HCT116 (cell line): ENCODE measurements at regions of chr11 and their contacts with region 1.

Region 1: DNA sequence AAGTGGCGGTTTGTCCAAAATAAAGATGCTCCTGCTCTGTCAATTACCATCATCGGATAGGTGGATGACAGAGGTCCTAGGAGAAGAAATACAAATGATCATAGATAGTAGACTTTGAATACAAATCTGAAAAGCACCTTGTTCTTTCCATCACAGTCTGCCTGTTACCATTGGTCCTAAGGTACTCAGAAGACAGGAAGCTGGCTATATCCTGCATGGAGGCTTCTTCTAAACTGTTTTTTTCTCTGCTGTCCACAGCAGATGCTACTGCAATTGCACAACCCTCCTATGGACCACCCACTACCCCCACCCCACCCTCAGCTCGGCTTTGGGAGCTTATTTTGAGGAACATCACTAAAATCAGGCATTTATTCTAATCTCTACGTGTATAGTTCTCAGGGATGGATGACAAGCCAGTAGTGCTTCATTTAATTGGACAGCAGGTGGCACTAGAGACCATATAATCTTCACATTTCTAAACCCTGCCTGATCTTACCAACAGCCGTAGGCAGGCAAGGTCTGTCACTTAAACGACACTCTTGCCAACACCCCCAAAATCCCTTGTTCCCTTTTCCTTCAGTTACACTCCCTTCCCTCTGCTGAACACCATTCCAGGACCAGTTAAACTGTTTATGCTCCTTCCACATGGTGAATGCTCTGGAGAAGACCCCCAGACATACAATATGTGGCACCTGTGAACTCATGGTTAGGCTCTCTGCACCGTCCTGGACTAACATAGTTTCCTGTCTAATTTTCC is 6.6 kb upstream of the PTS start:
- DNase-seq: peak; percentile 71
- ATAC-seq: peak; percentile 100
- H3K4me3 ChIP-seq: no peak overlapping the region
- H3K27ac ChIP-seq: no peak overlapping the region
- H3K4me1 ChIP-seq: no peaks in the 10 kb centered on the region
- H3K27me3 ChIP-seq: no peaks in the 10 kb centered on the region
- CTCF ChIP-seq: peak; percentile 57 to 85 (median 77)
- POLR2A ChIP-seq: no peak
- RAD21 ChIP-seq: peak; percentile 93

Region 2: GRCh38 chr11:112074026-112074811 is 145.4 kb before region 1 on chr11 and contains the start of gene NKAPD1:
- CTCF ChIA-PET with region 1: no interaction called
- POLR2A ChIA-PET with region 1: no interaction called
- RAD21 ChIA-PET with region 1: no interaction called
- intact Hi-C with region 1: no loop called
- DNase-seq: peak; percentile 83
- ATAC-seq: peak; percentile 88
- H3K4me3 ChIP-seq: peak within 1 kb of the TSS; percentile 83 to 98
- H3K27ac ChIP-seq: peak within 1 kb of the TSS; percentile 69
- H3K4me1 ChIP-seq: peaks cover 0 to 14% of the 10 kb centered on the region in 2 experiments; a peak in 3 of 4 replicates
- H3K27me3 ChIP-seq: no peaks in the 10 kb centered on the region
- CTCF ChIP-seq: 0 out of 6 replicates have a peak, but pooled peaks of 1 of the 3 experiments have one; percentile 9
- POLR2A ChIP-seq: peak; percentile 61
- RAD21 ChIP-seq: no peak
- total RNA-seq, gene NKAPD1: 19.4 TPM

Region 3: DNA sequence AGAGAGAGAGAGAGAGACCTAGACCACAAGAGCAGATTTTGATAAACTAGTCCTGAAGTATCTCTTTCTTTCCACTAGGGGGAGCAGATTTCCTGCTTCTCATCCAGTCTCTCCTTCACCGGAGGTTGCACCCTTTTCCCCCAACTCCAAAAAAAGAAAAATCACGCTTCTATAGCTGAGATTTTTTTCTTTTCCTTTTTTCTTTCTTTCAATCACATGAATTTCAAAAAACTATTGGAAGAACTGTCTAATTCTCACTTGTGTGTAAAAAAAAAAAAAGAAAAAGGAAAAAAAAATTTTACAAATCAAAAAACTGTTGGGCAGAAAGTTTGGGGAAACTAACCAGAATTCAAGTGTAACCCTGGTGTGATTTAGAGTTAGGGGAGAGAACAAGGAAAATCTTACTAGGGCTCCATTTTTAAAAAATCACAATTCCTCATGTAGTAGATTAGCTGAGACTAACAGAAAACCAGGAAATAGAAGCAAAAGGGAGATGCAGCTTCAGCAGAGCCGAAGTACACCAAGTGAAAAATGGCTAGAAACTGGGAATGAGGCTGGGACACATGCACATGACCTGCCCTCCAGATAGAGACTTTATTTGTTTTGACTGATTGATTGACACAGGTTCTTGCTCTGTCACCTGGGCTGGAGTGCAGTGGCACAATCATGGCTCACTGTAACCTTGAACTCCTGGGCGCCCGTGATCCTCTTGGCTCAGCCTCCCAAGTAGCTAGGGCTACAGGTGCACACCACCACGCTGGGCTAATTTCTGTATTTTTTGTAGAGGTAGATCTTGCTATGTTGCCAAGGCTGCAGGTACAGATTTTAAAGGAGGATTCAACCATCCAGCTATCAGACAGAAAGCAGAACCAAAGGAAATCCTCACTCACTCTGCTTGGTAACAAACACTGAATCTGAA is 105.9 kb before region 1 on chr11:
- CTCF ChIA-PET with region 1: interaction called, 10 read pairs
- POLR2A ChIA-PET with region 1: no interaction called
- RAD21 ChIA-PET with region 1: no interaction called
- intact Hi-C with region 1: no loop called
- DNase-seq: peak; percentile 49
- ATAC-seq: peak; percentile 81
- H3K4me3 ChIP-seq: no peak overlapping the region
- H3K27ac ChIP-seq: no peak overlapping the region; the same call in 1 of the 2 replicates
- H3K4me1 ChIP-seq: peaks cover 21 to 33% of the 10 kb centered on the region in 2 experiments
- H3K27me3 ChIP-seq: no peaks in the 10 kb centered on the region
- CTCF ChIP-seq: peak; percentile 49 to 63 (median 63); a peak in 5 of 6 replicates
- POLR2A ChIP-seq: no peak
- RAD21 ChIP-seq: peak; percentile 84

Region 4: DNA sequence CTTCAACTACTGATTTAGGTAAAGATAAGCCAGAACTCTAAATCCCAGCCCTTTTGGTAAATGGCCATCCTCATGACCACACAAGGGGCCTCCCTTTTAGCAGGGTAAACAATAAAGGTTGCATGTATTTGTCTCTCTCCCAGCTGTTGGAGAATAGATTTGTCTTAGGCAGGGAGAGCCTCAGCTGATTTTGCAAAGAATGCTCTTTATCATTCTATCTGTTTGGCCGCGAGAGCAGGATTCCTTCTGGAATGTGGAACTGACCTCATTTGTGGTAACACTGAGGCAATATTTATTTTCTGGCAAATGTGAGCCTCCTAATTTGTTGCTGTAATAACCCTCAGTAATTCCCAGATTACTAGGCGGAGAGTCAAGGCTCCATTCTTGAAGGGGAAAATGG is 21.8 kb after region 1 on chr11:
- CTCF ChIA-PET with region 1: no interaction called
- POLR2A ChIA-PET with region 1: no interaction called
- RAD21 ChIA-PET with region 1: no interaction called
- intact Hi-C with region 1: no loop called
- DNase-seq: no peak
- ATAC-seq: no peak
- H3K4me3 ChIP-seq: no peak overlapping the region
- H3K27ac ChIP-seq: no peak overlapping the region
- H3K4me1 ChIP-seq: no peaks in the 10 kb centered on the region
- H3K27me3 ChIP-seq: no peaks in the 10 kb centered on the region
- CTCF ChIP-seq: no peak
- POLR2A ChIP-seq: no peak
- RAD21 ChIP-seq: no peak

Region 5: DNA sequence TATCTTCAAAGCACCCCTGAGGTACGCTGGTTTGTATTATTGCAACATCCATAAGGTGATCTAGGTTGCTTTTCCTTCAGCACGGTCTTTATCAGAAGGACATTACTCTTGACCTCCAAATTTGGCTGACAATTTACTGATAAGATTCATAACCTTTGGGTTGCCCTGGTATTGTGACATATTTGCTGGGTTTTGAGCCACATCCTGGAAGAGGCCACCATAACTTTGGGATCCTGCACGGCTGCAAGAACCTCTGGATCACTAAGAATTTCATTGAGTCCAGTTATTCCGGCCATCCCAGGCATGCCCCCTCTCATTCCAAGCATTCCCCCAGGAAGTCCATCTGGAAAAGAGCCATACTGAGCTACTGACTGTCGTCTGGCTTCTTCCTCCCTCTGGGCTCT is 47.5 kb after region 1 on chr11:
- CTCF ChIA-PET with region 1: no interaction called
- POLR2A ChIA-PET with region 1: no interaction called
- RAD21 ChIA-PET with region 1: no interaction called
- intact Hi-C with region 1: no loop called
- DNase-seq: no peak
- ATAC-seq: no peak
- H3K4me3 ChIP-seq: no peak overlapping the region
- H3K27ac ChIP-seq: no peak overlapping the region
- H3K4me1 ChIP-seq: peaks cover 0 to 11% of the 10 kb centered on the region in 2 experiments; a peak in 2 of 4 replicates
- H3K27me3 ChIP-seq: no peaks in the 10 kb centered on the region
- CTCF ChIP-seq: no peak
- POLR2A ChIP-seq: no peak
- RAD21 ChIP-seq: no peak

Region 6: DNA sequence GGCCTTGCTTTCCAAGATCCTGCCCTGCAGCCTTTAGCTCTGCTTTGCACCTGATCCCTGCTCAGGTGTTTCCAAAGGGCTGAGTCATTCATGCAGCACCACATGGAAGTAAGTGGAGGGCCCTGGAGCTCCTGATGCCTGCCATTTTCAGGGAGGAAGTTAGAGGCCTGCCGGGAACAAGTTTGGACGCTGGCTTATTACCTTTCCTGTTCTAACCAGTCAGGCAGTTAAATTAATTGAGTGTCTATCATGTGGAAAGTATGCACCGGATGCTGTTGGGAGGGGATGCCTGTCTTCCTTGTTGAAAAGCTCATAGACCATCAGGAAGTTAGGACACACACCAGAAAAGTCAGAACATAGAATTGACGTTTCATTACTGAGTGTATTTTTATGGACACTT is 114.7 kb after region 1 on chr11:
- CTCF ChIA-PET with region 1: no interaction called
- POLR2A ChIA-PET with region 1: no interaction called
- RAD21 ChIA-PET with region 1: no interaction called
- intact Hi-C with region 1: no loop called
- DNase-seq: no peak
- ATAC-seq: no peak
- H3K4me3 ChIP-seq: no peak overlapping the region
- H3K27ac ChIP-seq: no peak overlapping the region
- H3K4me1 ChIP-seq: no peaks in the 10 kb centered on the region
- H3K27me3 ChIP-seq: no peaks in the 10 kb centered on the region
- CTCF ChIP-seq: no peak
- POLR2A ChIP-seq: no peak
- RAD21 ChIP-seq: no peak

Region 7: GRCh38 chr11:112453601-112454577 is 234.2 kb after region 1 on chr11:
- CTCF ChIA-PET with region 1: interaction called, 4 read pairs
- POLR2A ChIA-PET with region 1: no interaction called
- RAD21 ChIA-PET with region 1: no interaction called
- intact Hi-C with region 1: loop called (anchors 5 kb)
- DNase-seq: peak; percentile 34
- ATAC-seq: peak; percentile 94
- H3K4me3 ChIP-seq: no peak overlapping the region
- H3K27ac ChIP-seq: no peak overlapping the region
- H3K4me1 ChIP-seq: no peaks in the 10 kb centered on the region
- H3K27me3 ChIP-seq: no peaks in the 10 kb centered on the region
- CTCF ChIP-seq: peak; percentile 46 to 80 (median 54); a peak in 5 of 6 replicates
- POLR2A ChIP-seq: no peak
- RAD21 ChIP-seq: peak; percentile 40

Region 8: DNA sequence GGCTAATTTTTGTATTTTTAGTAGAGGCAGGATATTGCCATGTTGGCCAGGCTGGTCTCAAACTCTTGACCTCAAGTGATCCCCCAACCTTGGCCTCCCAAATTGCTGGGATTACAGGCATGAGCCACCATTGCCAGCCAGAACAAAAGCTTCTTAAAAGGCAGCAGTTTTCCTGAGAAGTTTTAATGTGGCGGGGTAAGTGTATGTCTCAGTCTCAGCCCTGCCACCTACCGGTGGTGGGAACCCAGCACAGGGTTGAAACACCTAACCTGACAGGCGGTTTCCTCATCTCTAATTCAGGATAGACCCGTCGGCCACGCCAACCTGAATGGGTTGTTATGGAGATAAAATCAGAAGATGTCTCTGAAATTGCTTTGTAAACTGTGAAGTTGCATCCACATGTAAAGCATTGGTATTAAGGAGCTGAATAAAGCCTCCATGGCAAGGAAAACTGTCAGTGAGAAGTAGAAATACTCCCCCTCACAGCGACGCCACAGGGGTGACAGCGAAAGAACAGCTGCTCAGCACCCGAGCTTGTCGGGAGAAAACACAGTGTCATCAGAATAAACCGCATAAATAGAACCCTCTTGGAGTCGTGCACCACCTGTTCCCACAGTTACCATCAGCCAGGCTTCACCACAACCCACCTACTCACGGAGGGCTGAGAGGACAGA is 575.6 kb after region 1 on chr11:
- CTCF ChIA-PET with region 1: no interaction called
- POLR2A ChIA-PET with region 1: no interaction called
- RAD21 ChIA-PET with region 1: no interaction called
- intact Hi-C with region 1: loop called (anchors 1 kb)
- DNase-seq: peak; percentile 38
- ATAC-seq: peak; percentile 97
- H3K4me3 ChIP-seq: no peak overlapping the region
- H3K27ac ChIP-seq: no peak overlapping the region
- H3K4me1 ChIP-seq: no peaks in the 10 kb centered on the region
- H3K27me3 ChIP-seq: 0 out of 2 replicates have a peak, but pooled peaks cover 5% of the 10 kb centered on the region
- CTCF ChIP-seq: peak; percentile 69 to 91 (median 82); a peak in 5 of 6 replicates
- POLR2A ChIP-seq: no peak
- RAD21 ChIP-seq: peak; percentile 67

Region 9: DNA sequence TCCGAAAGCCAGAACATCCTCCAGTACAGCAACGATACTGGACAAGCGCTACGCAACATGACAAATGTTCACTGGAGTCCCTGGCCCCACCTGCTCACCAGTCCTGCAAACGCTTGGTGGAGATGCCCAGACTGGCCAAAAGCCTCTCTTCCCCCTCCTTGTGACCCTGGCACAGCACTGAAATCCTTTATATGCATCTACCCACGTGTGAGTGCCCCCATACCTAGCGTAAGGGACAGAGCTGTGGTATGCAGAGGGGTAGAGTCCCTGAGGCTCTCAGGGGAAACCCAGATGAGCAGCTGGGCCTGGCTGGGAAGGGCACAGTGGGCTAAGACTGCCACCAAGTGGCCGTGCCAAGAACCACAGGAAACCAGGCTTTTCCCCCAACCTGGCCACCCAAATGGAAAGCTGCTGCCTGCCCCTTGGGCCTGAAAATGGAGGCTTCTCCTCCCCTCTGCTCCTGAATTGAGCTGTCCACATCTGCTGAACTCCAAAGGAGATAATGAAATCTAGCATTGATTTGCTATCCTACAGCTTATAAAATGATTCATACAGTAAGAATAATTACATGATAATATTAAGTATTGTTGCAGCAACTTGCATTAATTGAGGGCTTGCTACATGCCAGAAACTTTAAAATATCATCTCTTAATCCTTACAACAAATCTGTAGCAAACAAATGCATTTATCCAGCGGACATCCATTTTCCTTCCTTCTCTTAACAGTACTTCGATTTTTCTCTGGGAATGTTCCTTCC is 1070.0 kb after region 1 on chr11:
- CTCF ChIA-PET with region 1: interaction called, 5 read pairs
- POLR2A ChIA-PET with region 1: no interaction called
- RAD21 ChIA-PET with region 1: no interaction called
- intact Hi-C with region 1: loop called (anchors 2 kb)
- DNase-seq: peak; percentile 21
- ATAC-seq: peak; percentile 96
- H3K4me3 ChIP-seq: no peak overlapping the region
- H3K27ac ChIP-seq: no peak overlapping the region
- H3K4me1 ChIP-seq: no peaks in the 10 kb centered on the region
- H3K27me3 ChIP-seq: peaks cover 44% of the 10 kb centered on the region
- CTCF ChIP-seq: peak; percentile 60 to 90 (median 88)
- POLR2A ChIP-seq: no peak
- RAD21 ChIP-seq: peak; percentile 90